AG04450 (cell line): ENCODE measurements at regions of chr7 and their contacts with region 1.

Region 1: GRCh38 chr7:101077303-101078089 is 7.8 kb upstream of the TRIM56 start:
- DNase-seq: no peak
- H3K4me3 ChIP-seq: no peak overlapping the region
- H3K27ac ChIP-seq: no peak overlapping the region
- H3K27me3 ChIP-seq: peaks cover under 1% of the 10 kb centered on the region
- CTCF ChIP-seq: peak; percentile 95

Region 2: GRCh38 chr7:100889761-100890634 is 187.5 kb before region 1 on chr7:
- CTCF ChIA-PET with region 1: interaction called, 10 read pairs
- POLR2A ChIA-PET with region 1: no interaction called
- DNase-seq: peak; percentile 85
- H3K4me3 ChIP-seq: peak overlapping the region; percentile 63
- H3K27ac ChIP-seq: peak overlapping the region; percentile 75
- H3K27me3 ChIP-seq: peaks cover 2% of the 10 kb centered on the region
- CTCF ChIP-seq: no peak

Region 3: DNA sequence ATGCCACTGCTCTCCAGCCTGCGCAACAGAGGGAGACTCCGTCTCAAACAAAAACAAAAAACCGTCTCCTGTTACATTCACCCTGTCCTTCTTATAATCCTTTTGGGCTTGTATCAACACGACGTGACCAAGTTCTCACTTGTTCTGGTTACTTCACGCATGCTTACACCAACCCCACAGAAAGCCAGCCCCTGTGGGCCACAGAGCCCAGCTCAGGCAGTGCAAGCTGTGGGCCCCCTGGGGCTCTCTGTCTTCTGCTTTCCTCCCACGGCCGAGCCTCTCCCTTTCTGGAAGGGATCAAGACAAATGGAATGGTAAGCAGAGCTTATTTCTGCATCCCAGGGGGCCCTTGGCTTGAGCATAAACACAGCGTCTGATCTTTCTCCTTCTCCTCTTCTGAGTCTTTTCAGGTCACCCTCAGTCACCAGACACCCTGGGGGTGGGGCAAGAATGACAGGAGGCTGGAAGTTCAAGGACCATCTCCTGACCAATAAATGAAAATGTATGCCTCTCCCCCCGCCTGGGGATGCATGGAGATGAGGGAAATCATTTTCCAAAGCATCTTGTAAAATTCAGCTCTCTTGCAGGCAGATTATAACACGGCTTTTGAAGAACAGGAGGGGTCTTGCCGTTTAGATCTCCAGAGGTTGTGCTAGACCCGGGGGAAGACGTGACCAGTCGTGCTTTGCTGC is 11.2 kb before region 1 on chr7:
- CTCF ChIA-PET with region 1: interaction called, 17 read pairs
- POLR2A ChIA-PET with region 1: no interaction called
- DNase-seq: no peak
- H3K4me3 ChIP-seq: no peak overlapping the region
- H3K27ac ChIP-seq: no peak overlapping the region
- H3K27me3 ChIP-seq: peaks cover 18% of the 10 kb centered on the region
- CTCF ChIP-seq: no peak

Region 4: GRCh38 chr7:101094416-101095375 is 17.2 kb after region 1 on chr7:
- CTCF ChIA-PET with region 1: interaction called, 12 read pairs
- POLR2A ChIA-PET with region 1: no interaction called
- DNase-seq: peak; percentile 29
- H3K4me3 ChIP-seq: no peak overlapping the region
- H3K27ac ChIP-seq: peak overlapping the region; percentile 90
- H3K27me3 ChIP-seq: no peaks in the 10 kb centered on the region
- CTCF ChIP-seq: peak; percentile 76

Region 5: DNA sequence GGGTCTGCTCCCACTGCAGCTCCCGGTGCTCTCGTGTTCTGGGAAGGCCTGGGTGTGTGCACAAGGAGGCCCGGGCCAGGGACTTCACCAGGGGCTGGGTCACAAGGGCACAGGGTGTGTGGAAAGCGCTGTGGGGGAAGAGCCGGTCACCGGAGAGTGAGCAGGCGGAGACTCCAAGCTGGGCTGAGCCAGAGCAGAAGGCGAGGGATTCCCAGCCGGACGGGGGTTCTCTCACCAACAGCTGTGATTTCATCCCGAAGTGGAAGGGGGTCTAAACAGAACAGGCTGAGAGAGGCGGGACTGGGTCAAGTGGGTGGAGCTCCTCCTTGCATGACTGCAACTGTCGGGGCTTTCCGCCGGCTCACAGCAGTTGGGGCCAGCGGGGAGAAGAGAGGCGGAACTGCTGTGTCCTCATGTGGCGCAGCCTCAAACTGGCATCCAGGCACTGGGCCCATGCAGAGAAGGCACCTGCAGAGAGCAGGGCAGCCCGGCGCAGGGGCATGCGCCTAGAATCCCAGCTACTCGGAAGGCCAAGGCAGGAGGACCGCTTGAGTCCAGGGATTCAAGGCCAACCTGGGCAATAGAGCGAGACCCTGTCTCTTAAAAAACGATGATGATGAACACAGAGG is 1348.3 kb after region 1 on chr7:
- CTCF ChIA-PET with region 1: no interaction called
- POLR2A ChIA-PET with region 1: no interaction called
- DNase-seq: no peak
- H3K4me3 ChIP-seq: no peak overlapping the region
- H3K27ac ChIP-seq: no peak overlapping the region
- H3K27me3 ChIP-seq: no peaks in the 10 kb centered on the region
- CTCF ChIP-seq: no peak